PC-3 (cell line): ENCODE measurements at regions of chr5 and their contacts with region 1.

Region 1: DNA sequence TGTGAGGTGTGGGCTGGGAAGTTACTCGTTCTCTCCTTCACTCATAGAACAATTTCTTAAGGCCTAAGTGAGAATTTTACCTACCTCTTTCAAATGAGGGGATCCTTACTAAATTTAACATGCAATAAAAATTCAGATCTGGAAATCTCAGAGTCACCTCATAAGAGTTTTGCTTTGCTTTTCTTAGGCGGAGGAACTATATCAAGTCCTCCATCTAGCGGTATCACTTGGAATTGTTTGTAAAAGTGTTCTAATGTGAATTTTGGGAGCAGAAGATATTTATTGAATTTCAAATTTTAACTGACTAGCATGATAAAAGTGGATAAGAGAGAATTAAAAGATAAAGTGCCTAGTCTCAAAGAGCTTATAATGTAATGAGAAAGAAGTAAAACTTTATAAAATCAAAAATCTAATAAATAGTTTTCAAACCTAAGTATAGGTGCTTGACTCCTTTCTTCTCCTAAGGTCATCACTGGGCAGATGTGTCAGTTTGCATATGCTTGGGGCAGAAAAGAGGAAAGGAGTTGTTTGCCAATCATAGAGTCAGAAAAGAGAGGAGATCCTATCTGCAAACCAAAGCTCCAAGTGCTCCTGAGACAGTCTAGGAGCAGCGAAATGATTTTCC is 145.7 kb upstream of the DAB2 start:
- DNase-seq: peak; percentile 80
- ATAC-seq: 0 out of 2 replicates have a peak, but pooled peaks have one; percentile 45
- H3K4me3 ChIP-seq: no peak overlapping the region
- H3K27ac ChIP-seq: no peak overlapping the region
- H3K4me1 ChIP-seq: no peaks in the 10 kb centered on the region
- H3K27me3 ChIP-seq: no peaks in the 10 kb centered on the region
- CTCF ChIP-seq: peak; percentile 89

Region 2: GRCh38 chr5:38994324-38994927 is 576.1 kb before region 1 on chr5:
- CTCF ChIA-PET with region 1: no interaction called
- POLR2A ChIA-PET with region 1: no interaction called
- intact Hi-C with region 1: loop called (anchors 10 kb)
- DNase-seq: peak; percentile 89
- ATAC-seq: peak; percentile 78
- H3K4me3 ChIP-seq: no peak overlapping the region
- H3K27ac ChIP-seq: no peak overlapping the region
- H3K4me1 ChIP-seq: no peaks in the 10 kb centered on the region
- H3K27me3 ChIP-seq: no peaks in the 10 kb centered on the region
- CTCF ChIP-seq: peak; percentile 82

Region 3: DNA sequence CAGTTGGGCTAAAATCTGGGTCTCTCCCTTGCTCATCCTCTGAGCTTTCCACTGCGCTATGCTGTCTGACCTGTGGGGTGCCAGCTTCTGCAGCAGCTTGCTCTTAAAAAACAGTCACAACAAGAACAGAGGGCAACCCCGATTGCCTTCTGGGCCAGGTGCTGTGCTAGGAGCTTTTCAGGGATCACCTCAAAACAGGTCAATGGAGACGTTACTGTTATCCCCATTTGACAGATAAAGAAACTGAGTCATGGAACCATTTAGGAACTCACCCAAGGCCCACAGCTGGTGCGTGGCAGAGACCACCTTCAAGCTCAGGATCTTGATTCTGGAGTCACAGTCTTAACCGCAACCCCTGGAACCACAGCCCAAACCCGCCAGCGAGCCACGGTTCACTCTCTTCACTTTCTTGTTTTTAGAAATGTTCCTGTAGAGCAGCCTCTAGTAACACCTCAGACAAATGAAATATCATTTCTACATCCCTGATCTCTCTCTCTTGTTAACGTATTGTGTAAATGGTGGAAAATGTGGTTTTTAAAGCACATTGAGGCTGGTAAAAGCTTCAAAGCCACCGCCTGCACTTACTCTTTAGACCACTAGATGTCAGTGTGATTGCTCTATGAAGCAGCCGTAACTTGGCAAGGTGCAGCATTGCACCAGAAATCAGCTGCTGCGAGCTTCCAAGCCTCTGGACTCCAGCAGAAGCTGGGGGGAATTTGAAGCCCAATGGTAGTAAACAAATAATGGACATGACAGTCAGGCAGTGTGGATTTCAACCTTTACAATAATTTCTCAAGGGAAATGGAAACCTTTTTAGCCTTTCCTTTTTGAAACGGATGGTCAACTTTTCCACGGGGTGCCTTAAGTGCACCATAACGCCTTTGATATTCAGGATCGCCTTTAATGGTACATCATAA is 352.9 kb before region 1 on chr5:
- CTCF ChIA-PET with region 1: interaction called, 3 read pairs
- POLR2A ChIA-PET with region 1: no interaction called
- intact Hi-C with region 1: loop called (anchors 2 kb)
- DNase-seq: peak; percentile 95
- ATAC-seq: peak; percentile 39; the same call in 1 of the 2 replicates
- H3K4me3 ChIP-seq: no peak overlapping the region
- H3K27ac ChIP-seq: no peak overlapping the region
- H3K4me1 ChIP-seq: peaks cover 25% of the 10 kb centered on the region
- H3K27me3 ChIP-seq: no peaks in the 10 kb centered on the region
- CTCF ChIP-seq: peak; percentile 99

Region 4: DNA sequence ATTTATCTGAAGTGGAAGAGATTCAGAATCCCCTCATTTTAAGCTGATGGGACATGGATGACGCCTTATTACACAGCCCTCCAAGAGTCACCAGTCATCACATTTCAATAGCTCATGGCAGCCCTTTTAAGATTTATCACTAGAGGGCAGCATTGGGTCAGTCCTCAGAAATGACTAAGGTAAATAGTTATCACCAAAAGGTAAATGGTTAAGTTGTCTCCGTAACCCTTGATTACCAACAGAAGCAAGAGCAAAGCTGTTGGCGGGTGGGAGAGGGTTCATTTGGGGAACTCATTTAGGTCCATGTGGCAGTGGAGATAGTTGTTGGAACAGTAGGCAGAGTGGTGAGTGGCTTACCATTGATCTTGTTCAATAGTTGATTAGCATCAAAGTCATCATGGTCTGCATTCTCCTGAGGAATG is 194.2 kb before region 1 on chr5:
- CTCF ChIA-PET with region 1: interaction called, 4 read pairs
- POLR2A ChIA-PET with region 1: no interaction called
- intact Hi-C with region 1: loop called (anchors 1 kb)
- DNase-seq: peak; percentile 94
- ATAC-seq: peak; percentile 77
- H3K4me3 ChIP-seq: no peak overlapping the region
- H3K27ac ChIP-seq: no peak overlapping the region
- H3K4me1 ChIP-seq: no peaks in the 10 kb centered on the region
- H3K27me3 ChIP-seq: no peaks in the 10 kb centered on the region
- CTCF ChIP-seq: peak; percentile 98

Region 5: GRCh38 chr5:39547553-39548154 is 22.9 kb before region 1 on chr5:
- CTCF ChIA-PET with region 1: no interaction called
- POLR2A ChIA-PET with region 1: no interaction called
- intact Hi-C with region 1: loop called (anchors 1 kb)
- DNase-seq: peak; percentile 92
- ATAC-seq: peak; percentile 71
- H3K4me3 ChIP-seq: peak overlapping the region; percentile 25; the same call in 1 of the 2 replicates
- H3K27ac ChIP-seq: no peak overlapping the region
- H3K4me1 ChIP-seq: peaks cover 4% of the 10 kb centered on the region; the same call in 1 of the 2 replicates
- H3K27me3 ChIP-seq: no peaks in the 10 kb centered on the region
- CTCF ChIP-seq: peak; percentile 94

Region 6: GRCh38 chr5:39948867-39949468 is 378.5 kb after region 1 on chr5:
- CTCF ChIA-PET with region 1: no interaction called
- POLR2A ChIA-PET with region 1: no interaction called
- intact Hi-C with region 1: no loop called
- DNase-seq: peak; percentile 89
- ATAC-seq: peak; percentile 81
- H3K4me3 ChIP-seq: no peak overlapping the region
- H3K27ac ChIP-seq: no peak overlapping the region
- H3K4me1 ChIP-seq: no peaks in the 10 kb centered on the region
- H3K27me3 ChIP-seq: no peaks in the 10 kb centered on the region
- CTCF ChIP-seq: peak; percentile 93

Region 7: GRCh38 chr5:40150896-40151295 is 580.4 kb after region 1 on chr5:
- CTCF ChIA-PET with region 1: no interaction called
- POLR2A ChIA-PET with region 1: no interaction called
- intact Hi-C with region 1: loop called (anchors 10 kb)
- DNase-seq: no peak
- ATAC-seq: no peak
- H3K4me3 ChIP-seq: no peak overlapping the region
- H3K27ac ChIP-seq: no peak overlapping the region
- H3K4me1 ChIP-seq: no peaks in the 10 kb centered on the region
- H3K27me3 ChIP-seq: no peaks in the 10 kb centered on the region
- CTCF ChIP-seq: no peak

Region 8: GRCh38 chr5:40879163-40879942 is 1308.8 kb after region 1 on chr5:
- CTCF ChIA-PET with region 1: no interaction called
- POLR2A ChIA-PET with region 1: no interaction called
- intact Hi-C with region 1: loop called (anchors 10 kb)
- DNase-seq: peak; percentile 66
- ATAC-seq: peak; percentile 60; the same call in 1 of the 2 replicates
- H3K4me3 ChIP-seq: no peak overlapping the region
- H3K27ac ChIP-seq: no peak overlapping the region
- H3K4me1 ChIP-seq: no peaks in the 10 kb centered on the region
- H3K27me3 ChIP-seq: no peaks in the 10 kb centered on the region
- CTCF ChIP-seq: peak; percentile 87